Mammary epithelial cell (primary cell): ENCODE measurements at regions of chr6 and their contacts with region 1.

Region 1: GRCh38 chr6:73732845-73733675 is 37.1 kb downstream of the CD109 start:
- DNase-seq: peak; percentile 55
- H3K4me3 ChIP-seq: no peak overlapping the region
- H3K27ac ChIP-seq: no peak overlapping the region
- H3K4me1 ChIP-seq: no peaks in the 10 kb centered on the region
- H3K27me3 ChIP-seq: no peaks in the 10 kb centered on the region
- CTCF ChIP-seq: peak; percentile 93 to 98

Region 2: DNA sequence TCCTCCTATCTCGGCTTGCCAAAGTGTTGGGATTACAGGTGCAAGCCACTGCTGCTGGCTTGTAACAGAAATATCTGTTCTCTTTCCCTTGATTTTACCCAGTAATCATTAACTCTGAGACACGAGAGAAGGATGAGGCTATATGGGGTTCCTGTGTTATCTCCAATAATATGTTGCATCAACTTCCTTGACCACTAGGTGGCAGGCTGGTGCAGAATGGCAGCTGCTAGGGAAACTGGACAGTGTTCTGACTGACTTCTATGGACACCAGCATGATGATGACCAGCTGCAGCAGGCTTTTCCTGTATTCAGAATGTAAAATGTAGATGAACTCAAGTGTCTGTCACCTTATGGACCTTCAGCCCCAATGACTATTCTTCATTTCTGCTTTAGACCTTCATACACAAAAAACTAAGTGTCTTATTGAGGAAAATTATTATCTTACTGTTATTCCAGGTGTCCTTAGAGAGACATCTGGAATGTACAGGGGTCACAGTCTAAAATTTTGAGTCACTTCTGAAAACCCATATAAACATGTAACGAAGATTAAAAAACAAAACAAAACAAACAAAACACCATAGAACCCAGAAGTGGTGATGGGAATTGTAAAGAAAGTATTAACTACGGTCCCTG is 57.5 kb before region 1 on chr6:
- CTCF ChIA-PET with region 1: interaction called, 6 read pairs
- dilution Hi-C with region 1: no loop called
- in situ Hi-C with region 1: loop called (anchors 5 kb)
- intact Hi-C with region 1: loop called (anchors 1 kb)
- DNase-seq: peak; percentile 72
- H3K4me3 ChIP-seq: no peak overlapping the region
- H3K27ac ChIP-seq: no peak overlapping the region
- H3K4me1 ChIP-seq: peaks cover 10% of the 10 kb centered on the region
- H3K27me3 ChIP-seq: no peaks in the 10 kb centered on the region
- CTCF ChIP-seq: peak; percentile 92 to 95

Region 3: GRCh38 chr6:73688351-73688750 is 44.7 kb before region 1 on chr6:
- CTCF ChIA-PET with region 1: interaction called, 3 read pairs
- dilution Hi-C with region 1: loop called (anchors 5 kb)
- in situ Hi-C with region 1: no loop called
- intact Hi-C with region 1: loop called (anchors 1 kb)
- DNase-seq: no peak
- H3K4me3 ChIP-seq: no peak overlapping the region
- H3K27ac ChIP-seq: no peak overlapping the region
- H3K4me1 ChIP-seq: peaks cover 11% of the 10 kb centered on the region
- H3K27me3 ChIP-seq: no peaks in the 10 kb centered on the region
- CTCF ChIP-seq: no peak

Region 4: GRCh38 chr6:73704260-73704659 is 28.8 kb before region 1 on chr6:
- CTCF ChIA-PET with region 1: no interaction called
- dilution Hi-C with region 1: no loop called
- in situ Hi-C with region 1: no loop called
- intact Hi-C with region 1: no loop called
- DNase-seq: peak; percentile 100
- H3K4me3 ChIP-seq: peak overlapping the region in 1 of 3 experiments; percentile 6
- H3K27ac ChIP-seq: peak overlapping the region; percentile 98
- H3K4me1 ChIP-seq: peaks cover 54% of the 10 kb centered on the region
- H3K27me3 ChIP-seq: no peaks in the 10 kb centered on the region
- CTCF ChIP-seq: no peak

Region 5: GRCh38 chr6:74091136-74091793 is 358.2 kb after region 1 on chr6:
- CTCF ChIA-PET with region 1: no interaction called
- dilution Hi-C with region 1: no loop called
- in situ Hi-C with region 1: no loop called
- intact Hi-C with region 1: loop called (anchors 10 kb)
- DNase-seq: peak; percentile 20
- H3K4me3 ChIP-seq: no peak overlapping the region
- H3K27ac ChIP-seq: no peak overlapping the region
- H3K4me1 ChIP-seq: no peaks in the 10 kb centered on the region
- H3K27me3 ChIP-seq: no peaks in the 10 kb centered on the region
- CTCF ChIP-seq: peak; percentile 70 to 73